ENCODE measurements at regions of chr7 and their contacts with region 1.

Region 1: DNA sequence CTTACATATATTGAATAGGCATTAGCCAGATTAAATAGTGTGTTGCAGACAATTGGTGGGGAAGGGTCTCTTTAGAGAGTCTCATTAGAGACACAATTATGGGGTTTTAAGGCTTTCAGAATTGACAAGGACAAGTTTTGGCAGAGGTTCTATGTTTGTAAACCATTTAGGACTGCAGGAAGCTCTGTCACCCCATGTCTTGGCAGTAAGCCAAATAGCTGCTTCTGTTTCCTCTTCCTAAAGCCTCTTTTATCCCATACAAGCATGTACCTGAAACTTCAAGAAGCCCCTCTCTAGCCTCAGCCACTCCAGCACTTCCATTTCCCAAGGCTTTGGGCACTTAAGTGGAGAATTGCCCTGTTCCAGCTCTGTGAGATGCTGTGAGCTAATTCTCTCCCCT is 21.8 kb upstream of the LRRC4 start:
- DNase-seq: no peak
- ATAC-seq: no peak
- H3K4me3 ChIP-seq: no peak overlapping the region
- H3K27ac ChIP-seq: no peak overlapping the region
- H3K4me1 ChIP-seq: peaks cover 0 to 14% (median 6%) of the 10 kb centered on the region in 12 donors
- H3K27me3 ChIP-seq: no peaks in the 10 kb centered on the region
- CTCF ChIP-seq: no peak
- POLR2A ChIP-seq: no peak

Region 2: GRCh38 chr7:127417346-127417745 is 635.7 kb before region 1 on chr7:
- intact Hi-C with region 1: no loop called
- DNase-seq: no peak
- ATAC-seq: no peak
- H3K4me3 ChIP-seq: no peak overlapping the region
- H3K27ac ChIP-seq: no peak overlapping the region
- H3K4me1 ChIP-seq: peaks cover 0 to 18% (median 0%) of the 10 kb centered on the region in 12 donors
- H3K27me3 ChIP-seq: peaks cover 0 to 8% (median 0%) of the 10 kb centered on the region in 9 donors
- CTCF ChIP-seq: no peak
- POLR2A ChIP-seq: no peak

Region 3: GRCh38 chr7:127905491-127906330 is 147.3 kb before region 1 on chr7:
- intact Hi-C with region 1: no loop called
- DNase-seq: no peak
- ATAC-seq: no peak
- H3K4me3 ChIP-seq: no peak overlapping the region
- H3K27ac ChIP-seq: no peak overlapping the region
- H3K4me1 ChIP-seq: peaks cover 0 to 17% (median 6%) of the 10 kb centered on the region in 12 donors
- H3K27me3 ChIP-seq: no peaks in the 10 kb centered on the region
- CTCF ChIP-seq: no peak
- POLR2A ChIP-seq: no peak

Region 4: GRCh38 chr7:127976056-127976737 is 76.8 kb before region 1 on chr7:
- intact Hi-C with region 1: no loop called
- DNase-seq: no peak
- ATAC-seq: peak in 3 of 4 donors; percentile 41 to 72 (median 64)
- H3K4me3 ChIP-seq: no peak overlapping the region
- H3K27ac ChIP-seq: no peak overlapping the region
- H3K4me1 ChIP-seq: peaks cover 0 to 5% (median 0%) of the 10 kb centered on the region in 12 donors
- H3K27me3 ChIP-seq: no peaks in the 10 kb centered on the region
- CTCF ChIP-seq: no peak
- POLR2A ChIP-seq: no peak

Region 5: GRCh38 chr7:128108641-128109423 is 55.8 kb after region 1 on chr7:
- intact Hi-C with region 1: loop called in 1 of 10 experiments (anchors 2 kb)
- DNase-seq: no peak
- ATAC-seq: peak in 3 of 4 donors; percentile 30 to 67 (median 44)
- H3K4me3 ChIP-seq: no peak overlapping the region
- H3K27ac ChIP-seq: no peak overlapping the region
- H3K4me1 ChIP-seq: peaks cover 0 to 46% (median 11%) of the 10 kb centered on the region in 12 donors
- H3K27me3 ChIP-seq: peaks cover 0 to 20% (median 4%) of the 10 kb centered on the region in 9 donors
- CTCF ChIP-seq: no peak
- POLR2A ChIP-seq: no peak